ENCODE measurements at regions of chr1 and their contacts with region 1.

Region 1: GRCh38 chr1:75208862-75209261 is 74.7 kb downstream of the LHX8 start:
- DNase-seq: no peak
- H3K4me3 ChIP-seq: no peak overlapping the region
- H3K27ac ChIP-seq: no peak overlapping the region
- H3K4me1 ChIP-seq: no peaks in the 10 kb centered on the region
- H3K27me3 ChIP-seq: no peaks in the 10 kb centered on the region
- CTCF ChIP-seq: no peak
- POLR2A ChIP-seq: no peak

Region 2: DNA sequence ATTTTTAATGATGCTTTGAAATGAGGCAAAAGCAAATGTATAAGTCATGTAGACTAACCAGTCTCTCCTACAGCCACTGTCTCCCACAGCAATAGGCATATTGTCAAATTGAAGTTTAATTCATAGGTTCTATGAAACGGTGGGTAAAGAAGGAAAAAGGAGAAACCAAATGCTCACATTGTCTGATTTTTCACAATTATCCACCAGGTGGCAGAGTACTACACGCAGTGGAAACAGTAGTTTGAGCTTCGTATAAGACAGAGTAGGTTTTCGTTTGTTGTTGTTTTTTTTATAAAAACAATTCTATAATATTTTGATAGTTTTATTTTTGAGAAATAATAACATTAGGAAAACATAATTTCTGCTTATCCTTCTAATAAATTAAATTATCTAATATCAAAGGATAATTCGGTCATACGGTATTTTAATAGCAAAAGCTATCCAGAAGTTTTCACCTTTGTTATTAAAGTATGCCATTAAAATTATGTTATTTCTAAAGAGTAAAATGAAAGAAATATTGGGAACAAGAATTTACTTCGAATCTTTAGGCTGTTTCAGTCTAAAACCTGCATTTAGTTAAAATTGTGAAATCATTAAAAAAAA is 436.8 kb before region 1 on chr1:
- intact Hi-C with region 1: loop called (anchors 5 kb)
- DNase-seq: peak; percentile 7
- H3K4me3 ChIP-seq: no peak overlapping the region
- H3K27ac ChIP-seq: no peak overlapping the region
- H3K4me1 ChIP-seq: no peaks in the 10 kb centered on the region
- H3K27me3 ChIP-seq: no peaks in the 10 kb centered on the region
- CTCF ChIP-seq: peak in 3 of 4 experiments; percentile 50 to 54 (median 51)
- POLR2A ChIP-seq: no peak

Region 3: DNA sequence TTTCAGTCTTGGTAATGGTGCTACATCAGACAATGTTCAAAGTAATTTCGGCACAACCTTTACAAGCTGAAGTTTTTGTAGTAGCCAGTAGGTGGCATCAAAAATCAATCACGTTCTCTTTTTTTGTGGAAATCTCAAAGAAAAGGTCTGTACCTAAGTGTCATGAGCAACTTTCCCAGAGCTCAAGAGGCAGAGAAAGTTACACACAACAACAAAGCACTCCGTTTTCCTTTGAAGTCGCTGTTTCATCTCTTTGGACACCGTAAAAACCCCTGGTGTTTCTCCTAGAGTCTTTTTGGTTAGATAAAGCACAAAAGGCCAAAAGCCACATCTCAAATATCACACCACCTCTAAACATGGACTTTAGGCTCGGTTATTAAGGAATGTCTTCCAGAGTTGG is 56.9 kb after region 1 on chr1:
- intact Hi-C with region 1: no loop called
- DNase-seq: no peak
- H3K4me3 ChIP-seq: no peak overlapping the region
- H3K27ac ChIP-seq: no peak overlapping the region
- H3K4me1 ChIP-seq: no peaks in the 10 kb centered on the region
- H3K27me3 ChIP-seq: no peaks in the 10 kb centered on the region
- CTCF ChIP-seq: peak in 3 of 4 experiments; percentile 27 to 51 (median 34)
- POLR2A ChIP-seq: no peak